Colonic mucosa (tissue), 4 donors: ENCODE measurements at regions of chr15 and their contacts with region 1.

Region 1: GRCh38 chr15:83559310-83559966 is 94.5 kb upstream of the ADAMTSL3 start:
- DNase-seq: peak; percentile 46
- H3K4me3 ChIP-seq: no peak overlapping the region
- H3K27ac ChIP-seq: no peak overlapping the region
- H3K4me1 ChIP-seq: no peaks in the 10 kb centered on the region
- H3K27me3 ChIP-seq: no peaks in the 10 kb centered on the region
- CTCF ChIP-seq: peak; percentile 42

Region 2: DNA sequence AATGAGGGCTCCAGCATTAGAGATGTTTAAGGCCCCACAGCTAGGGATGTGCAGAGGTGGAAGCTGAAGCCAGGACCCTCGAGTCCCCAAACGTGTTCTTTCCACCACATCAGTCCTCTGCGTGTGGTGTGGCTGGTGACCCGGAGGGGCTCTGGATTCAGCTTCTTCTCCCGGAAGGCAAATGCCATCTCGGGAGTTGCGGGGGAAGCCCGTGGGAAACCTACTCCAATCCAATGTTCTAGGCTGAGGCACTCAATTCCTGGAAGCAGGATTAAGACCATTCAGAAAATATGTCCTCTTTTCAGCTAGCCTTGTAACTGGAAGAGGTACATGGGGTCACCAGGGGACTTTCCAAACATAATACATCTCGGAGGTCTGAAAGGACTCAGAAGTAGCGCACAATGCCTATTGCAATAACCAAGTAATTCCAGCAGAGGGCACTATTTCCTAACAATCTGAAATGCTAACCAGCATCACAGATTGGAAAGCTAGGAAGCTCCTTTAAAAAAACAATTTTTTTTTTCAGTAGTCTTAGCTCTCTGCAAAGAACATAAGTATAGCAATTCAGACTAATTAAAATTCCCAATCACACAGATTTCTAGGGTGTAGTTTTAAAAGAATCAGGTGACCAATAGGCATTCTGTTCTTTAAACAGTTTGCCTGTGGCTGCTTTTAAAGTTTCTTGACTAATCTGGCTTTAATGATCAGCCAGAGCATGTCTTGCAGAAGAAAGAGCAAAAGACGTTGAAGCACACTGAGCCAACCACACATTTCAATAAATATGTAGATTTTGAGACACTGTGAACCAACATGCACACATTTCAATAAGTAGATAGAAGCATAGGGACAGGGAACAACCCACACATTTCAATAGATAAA is 311.0 kb before region 1 on chr15:
- intact Hi-C with region 1: loop called (anchors 5 kb)
- DNase-seq: peak; percentile 34
- H3K4me3 ChIP-seq: no peak overlapping the region
- H3K27ac ChIP-seq: no peak overlapping the region
- H3K4me1 ChIP-seq: no peaks in the 10 kb centered on the region
- H3K27me3 ChIP-seq: no peaks in the 10 kb centered on the region
- CTCF ChIP-seq: peak; percentile 95

Region 3: GRCh38 chr15:83436458-83437158 is 122.8 kb before region 1 on chr15:
- intact Hi-C with region 1: loop called (anchors 2 kb)
- DNase-seq: no peak
- H3K4me3 ChIP-seq: no peak overlapping the region
- H3K27ac ChIP-seq: no peak overlapping the region
- H3K4me1 ChIP-seq: no peaks in the 10 kb centered on the region
- H3K27me3 ChIP-seq: no peaks in the 10 kb centered on the region
- CTCF ChIP-seq: no peak

Region 4: GRCh38 chr15:83747050-83747717 is 187.7 kb after region 1 on chr15:
- intact Hi-C with region 1: loop called (anchors 10 kb)
- DNase-seq: no peak
- H3K4me3 ChIP-seq: no peak overlapping the region
- H3K27ac ChIP-seq: no peak overlapping the region
- H3K4me1 ChIP-seq: no peaks in the 10 kb centered on the region
- H3K27me3 ChIP-seq: no peaks in the 10 kb centered on the region
- CTCF ChIP-seq: no peak

Region 5: DNA sequence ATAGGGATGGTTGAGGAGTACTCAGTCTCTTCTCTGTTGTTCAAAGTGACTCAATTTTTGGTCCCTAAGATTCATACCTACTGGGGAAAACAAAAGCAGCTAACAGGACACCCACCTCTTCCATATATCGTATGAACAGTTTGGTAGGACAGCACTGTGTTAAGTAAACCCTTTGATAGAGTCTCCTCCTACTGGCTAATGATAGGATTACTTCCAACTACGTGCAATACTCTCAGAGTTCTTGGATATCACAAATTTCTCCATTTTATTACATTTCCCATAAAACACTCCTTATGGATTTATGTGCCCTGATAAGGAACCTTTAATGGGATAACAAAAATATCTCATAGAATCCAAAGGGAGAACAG is 475.9 kb after region 1 on chr15:
- intact Hi-C with region 1: loop called (anchors 10 kb)
- DNase-seq: no peak
- H3K4me3 ChIP-seq: no peak overlapping the region
- H3K27ac ChIP-seq: no peak overlapping the region
- H3K4me1 ChIP-seq: no peaks in the 10 kb centered on the region
- H3K27me3 ChIP-seq: no peaks in the 10 kb centered on the region
- CTCF ChIP-seq: no peak